KBM-7 (cell line): ENCODE measurements at regions of chr1 and their contacts with region 1.

Region 1: DNA sequence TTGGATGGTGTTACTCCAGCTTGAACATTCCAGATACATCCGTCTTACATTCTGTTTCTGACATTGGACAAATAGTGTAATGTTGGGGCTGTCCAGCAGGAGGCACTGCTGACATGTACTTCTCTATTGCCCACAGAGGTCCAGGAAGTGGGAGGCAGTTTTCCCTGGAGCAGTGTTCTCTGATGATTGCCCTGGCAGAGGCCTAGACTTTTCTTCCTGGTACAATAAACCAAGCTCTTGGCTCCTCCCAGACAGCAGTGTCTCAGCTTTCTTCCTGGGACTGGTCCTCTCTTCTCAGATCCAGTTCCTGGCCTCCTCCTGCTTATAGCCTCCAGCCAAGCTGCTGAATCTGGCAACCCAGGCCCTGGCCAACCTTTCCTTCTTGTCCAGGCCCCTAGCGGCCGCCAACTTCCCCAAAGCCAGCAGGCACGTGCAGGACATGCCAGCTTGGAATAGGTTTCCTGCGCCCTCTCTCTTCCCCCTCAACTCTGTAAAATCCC is 14.9 kb upstream of the IFNLR1 start:
- DNase-seq: peak; percentile 85

Region 2: GRCh38 chr1:24385160-24385940 is 183.4 kb after region 1 on chr1:
- in situ Hi-C with region 1: loop called (anchors 10 kb)
- DNase-seq: peak; percentile 15

Region 3: GRCh38 chr1:24601023-24601527 is 399.1 kb after region 1 on chr1:
- in situ Hi-C with region 1: loop called (anchors 25 kb)
- DNase-seq: no peak